ENCODE measurements at regions of chr2 and their contacts with region 1.

Region 1: DNA sequence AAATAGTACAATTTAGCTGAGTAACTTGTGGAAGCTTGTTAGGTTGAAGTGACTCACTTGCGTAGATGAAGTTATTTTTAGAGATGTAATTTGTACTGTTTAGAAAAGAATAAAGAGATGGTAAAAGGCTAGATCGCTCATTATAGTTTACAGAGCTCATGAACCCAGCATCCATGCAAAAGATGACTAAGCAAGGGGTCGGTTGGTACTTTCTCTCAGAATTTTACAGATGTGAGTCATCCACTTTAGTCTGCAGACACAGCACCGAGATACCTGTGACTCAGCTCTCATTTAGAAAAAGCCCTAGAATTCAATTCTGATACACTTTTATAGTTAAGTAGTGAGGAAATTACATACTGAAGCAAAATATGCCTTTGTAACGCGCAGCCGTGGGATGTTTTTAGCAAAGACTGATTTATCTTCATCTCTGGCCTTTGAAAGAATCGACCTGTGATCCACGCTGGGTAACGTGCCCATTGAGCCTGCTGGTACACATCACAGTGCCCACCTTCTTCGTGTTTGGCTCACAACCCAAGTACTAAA is 116.5 kb upstream of the FOSL2 start:
- DNase-seq: no peak
- H3K4me3 ChIP-seq: no peak overlapping the region
- H3K4me3 Mint-ChIP-seq: no peak overlapping the region
- H3K27ac Mint-ChIP-seq: peak overlapping the region; percentile 93
- H3K4me1 ChIP-seq: peaks cover 68% of the 10 kb centered on the region
- H3K4me1 Mint-ChIP-seq: peaks cover 65% of the 10 kb centered on the region
- H3K27me3 ChIP-seq: no peaks in the 10 kb centered on the region
- H3K27me3 Mint-ChIP-seq: no peaks in the 10 kb centered on the region
- CTCF ChIP-seq: no peak

Region 2: GRCh38 chr2:28155627-28156026 is 120.5 kb before region 1 on chr2:
- CTCF ChIA-PET with region 1: no interaction called
- POLR2A ChIA-PET with region 1: no interaction called
- intact Hi-C with region 1: loop called (anchors 1 kb)
- DNase-seq: peak in 1 of 2 experiments; percentile 63
- H3K4me3 ChIP-seq: no peak overlapping the region
- H3K4me3 Mint-ChIP-seq: peak overlapping the region; percentile 18
- H3K27ac Mint-ChIP-seq: peak overlapping the region; percentile 87
- H3K4me1 ChIP-seq: peaks cover 28% of the 10 kb centered on the region
- H3K4me1 Mint-ChIP-seq: peaks cover 24% of the 10 kb centered on the region
- H3K27me3 ChIP-seq: no peaks in the 10 kb centered on the region
- H3K27me3 Mint-ChIP-seq: no peaks in the 10 kb centered on the region
- CTCF ChIP-seq: peak; percentile 82 to 84